Naive thymus-derived CD4-positive, alpha-beta T cell (primary cell): ENCODE measurements at regions of chrX and their contacts with region 1.

Region 1: GRCh38 chrX:40153335-40154249 is 55.8 kb upstream of the BCOR start:
- DNase-seq: peak in 4 of 9 donors; percentile 32 to 75 (median 56)
- ATAC-seq: peak; percentile 70
- H3K4me3 ChIP-seq: peak overlapping the region; percentile 50
- H3K4me3 Mint-ChIP-seq: peak overlapping the region; percentile 81 to 88 (median 84)
- H3K27ac ChIP-seq: peak overlapping the region; percentile 27
- H3K27ac Mint-ChIP-seq: peak overlapping the region in 7 of 9 donors; percentile 39 to 84 (median 70)
- H3K4me1 ChIP-seq: peaks cover 0 to 4% of the 10 kb centered on the region in 2 donors
- H3K4me1 Mint-ChIP-seq: peaks cover 0 to 22% (median 14%) of the 10 kb centered on the region in 7 donors
- H3K27me3 ChIP-seq: no peaks in the 10 kb centered on the region
- H3K27me3 Mint-ChIP-seq: peaks cover 0 to 8% (median 0%) of the 10 kb centered on the region in 5 donors

Region 2: GRCh38 chrX:40013266-40014195 is 140.1 kb before region 1 on chrX:
- CTCF ChIA-PET with region 1: interaction called, 3 read pairs
- POLR2A ChIA-PET with region 1: no interaction called
- intact Hi-C with region 1: loop called in 1 of 2 experiments (anchors 2 kb)
- DNase-seq: peak in 2 of 9 donors; percentile 18 to 53
- ATAC-seq: peak; percentile 42
- H3K4me3 ChIP-seq: peak overlapping the region; percentile 51
- H3K4me3 Mint-ChIP-seq: peak overlapping the region; percentile 70 to 87 (median 75)
- H3K27ac ChIP-seq: no peak overlapping the region
- H3K27ac Mint-ChIP-seq: peak overlapping the region in 2 of 9 donors; percentile 43 to 83
- H3K4me1 ChIP-seq: peaks cover 0 to 31% of the 10 kb centered on the region in 2 donors
- H3K4me1 Mint-ChIP-seq: peaks cover 5 to 35% (median 24%) of the 10 kb centered on the region in 7 donors
- H3K27me3 ChIP-seq: no peaks in the 10 kb centered on the region
- H3K27me3 Mint-ChIP-seq: peaks cover 0 to 24% (median 0%) of the 10 kb centered on the region in 5 donors

Region 3: GRCh38 chrX:40108959-40109287 is 44.7 kb before region 1 on chrX:
- CTCF ChIA-PET with region 1: no interaction called
- POLR2A ChIA-PET with region 1: interaction called, 15 read pairs
- intact Hi-C with region 1: loop called (anchors 1 to 2 kb)
- DNase-seq: peak in 5 of 9 donors; percentile 44 to 64 (median 51)
- ATAC-seq: peak; percentile 59
- H3K4me3 ChIP-seq: peak overlapping the region; percentile 43
- H3K4me3 Mint-ChIP-seq: peak overlapping the region in 9 of 10 donors; percentile 54 to 87 (median 73)
- H3K27ac ChIP-seq: peak overlapping the region; percentile 23
- H3K27ac Mint-ChIP-seq: no peak overlapping the region
- H3K4me1 ChIP-seq: no peaks in the 10 kb centered on the region
- H3K4me1 Mint-ChIP-seq: peaks cover 0 to 28% (median 13%) of the 10 kb centered on the region in 7 donors
- H3K27me3 ChIP-seq: no peaks in the 10 kb centered on the region
- H3K27me3 Mint-ChIP-seq: peaks cover 0 to 7% (median 0%) of the 10 kb centered on the region in 5 donors

Region 4: GRCh38 chrX:40127052-40127451 is 26.5 kb before region 1 on chrX:
- CTCF ChIA-PET with region 1: no interaction called
- POLR2A ChIA-PET with region 1: interaction called, 4 read pairs
- intact Hi-C with region 1: loop called in 1 of 2 experiments (anchors 2 kb)
- DNase-seq: peak in 2 of 9 donors; percentile 23 to 38
- ATAC-seq: peak; percentile 72
- H3K4me3 ChIP-seq: no peak overlapping the region
- H3K4me3 Mint-ChIP-seq: peak overlapping the region in 2 of 10 donors; percentile 18 to 40
- H3K27ac ChIP-seq: no peak overlapping the region
- H3K27ac Mint-ChIP-seq: peak overlapping the region in 5 of 9 donors; percentile 10 to 87 (median 16)
- H3K4me1 ChIP-seq: peaks cover 3 to 9% of the 10 kb centered on the region in 2 donors
- H3K4me1 Mint-ChIP-seq: peaks cover 6 to 10% (median 6%) of the 10 kb centered on the region in 7 donors
- H3K27me3 ChIP-seq: no peaks in the 10 kb centered on the region
- H3K27me3 Mint-ChIP-seq: no peaks in the 10 kb centered on the region

Region 5: DNA sequence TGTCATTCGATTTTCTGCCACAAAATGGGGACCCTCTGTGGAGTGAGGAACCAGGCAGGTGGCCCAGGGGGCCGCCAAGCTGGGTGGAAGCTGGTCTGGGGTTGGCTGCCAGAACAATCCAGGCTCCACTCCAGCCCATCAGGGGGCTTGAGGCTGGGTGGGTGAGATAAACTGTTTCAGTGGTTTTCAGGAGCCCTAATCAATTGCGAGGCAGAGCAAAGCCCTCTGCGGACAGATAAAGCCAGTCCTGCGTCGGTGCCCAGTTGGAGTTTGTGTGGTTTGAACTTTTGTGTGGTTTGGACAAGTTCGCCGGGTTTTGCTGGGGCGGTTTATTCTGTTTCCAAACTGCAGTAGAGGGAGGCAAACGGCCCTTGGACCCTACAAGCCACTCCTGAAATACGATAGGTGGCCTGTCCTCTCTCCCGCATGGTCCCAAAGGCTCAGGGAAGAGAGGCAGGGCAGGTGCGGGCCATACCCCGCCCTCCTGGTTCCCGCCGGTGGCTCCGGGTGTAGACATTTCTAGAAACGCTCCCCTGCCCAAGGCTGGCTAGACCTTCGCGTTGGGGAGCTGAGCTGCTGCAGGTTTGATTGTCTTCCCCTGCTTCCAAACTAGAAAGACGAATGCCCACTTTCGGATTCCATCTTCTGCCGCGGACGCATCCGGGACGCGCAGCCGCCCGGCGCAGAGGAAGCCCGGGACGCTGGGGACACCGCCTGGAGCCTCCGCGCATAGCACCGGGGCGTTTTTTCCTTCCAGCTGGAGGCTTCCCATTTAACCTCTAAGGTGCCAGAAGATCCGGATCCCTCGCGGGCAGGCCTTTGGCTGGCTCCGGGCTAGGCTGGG is 113.1 kb after region 1 on chrX:
- CTCF ChIA-PET with region 1: no interaction called
- POLR2A ChIA-PET with region 1: no interaction called
- intact Hi-C with region 1: loop called in 1 of 2 experiments (anchors 2 kb)
- DNase-seq: peak; percentile 10 to 48 (median 35)
- ATAC-seq: peak; percentile 84
- H3K4me3 ChIP-seq: peak overlapping the region; percentile 61
- H3K4me3 Mint-ChIP-seq: peak overlapping the region; percentile 66 to 87 (median 80)
- H3K27ac ChIP-seq: peak overlapping the region; percentile 8
- H3K27ac Mint-ChIP-seq: peak overlapping the region in 1 of 9 donors; percentile 47
- H3K4me1 ChIP-seq: no peaks in the 10 kb centered on the region
- H3K4me1 Mint-ChIP-seq: peaks cover 0 to 13% (median 6%) of the 10 kb centered on the region in 7 donors
- H3K27me3 ChIP-seq: no peaks in the 10 kb centered on the region
- H3K27me3 Mint-ChIP-seq: no peaks in the 10 kb centered on the region